ENCODE measurements at regions of chr3 and their contacts with region 1.

Region 1: DNA sequence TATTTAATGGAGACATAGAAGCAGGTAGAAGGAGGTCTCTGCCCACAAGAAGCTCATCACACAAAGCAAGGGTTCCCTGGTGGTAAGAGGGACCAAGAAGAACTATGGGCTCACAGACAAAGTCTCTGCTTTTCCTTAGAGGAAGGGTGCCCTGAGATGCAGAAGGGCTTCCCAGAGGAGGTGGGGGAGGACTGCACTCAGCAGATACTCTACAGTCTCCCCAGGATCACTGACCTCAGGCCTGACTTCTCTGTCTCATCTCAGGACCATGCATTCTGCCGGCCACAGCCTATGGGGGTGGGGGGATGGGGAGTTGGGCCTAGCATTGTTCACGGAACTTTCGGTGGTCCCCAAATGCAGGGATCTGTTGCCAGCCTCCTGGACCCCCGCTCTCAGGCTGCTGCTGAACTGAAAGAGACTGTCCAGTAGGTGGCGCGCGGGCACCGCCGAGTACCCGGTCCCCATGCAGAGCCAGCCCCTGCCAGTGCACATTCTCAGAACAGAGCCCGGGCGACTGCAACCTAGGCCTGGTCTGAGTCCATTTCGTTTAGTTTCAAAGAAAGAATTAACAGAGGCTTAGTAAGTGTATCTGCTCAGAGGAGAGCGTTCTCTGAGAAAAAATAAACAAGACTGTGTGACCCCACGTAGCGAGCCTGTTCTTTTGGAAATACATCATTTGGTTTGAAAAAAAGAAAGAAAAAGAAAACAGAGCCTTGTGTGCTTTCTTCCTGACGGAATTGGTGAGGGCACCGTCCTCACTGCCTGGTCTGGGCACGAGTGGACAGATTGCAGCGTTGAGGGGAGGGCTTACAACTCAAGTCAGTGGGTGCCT is 74.1 kb downstream of the LRTM1 start:
- DNase-seq: no peak
- ATAC-seq: peak; percentile 98
- H3K4me3 ChIP-seq: no peak overlapping the region
- H3K27ac ChIP-seq: no peak overlapping the region
- H3K4me1 ChIP-seq: no peaks in the 10 kb centered on the region
- H3K27me3 ChIP-seq: no peaks in the 10 kb centered on the region
- CTCF ChIP-seq: peak; percentile 76 to 90 (median 81)
- EP300 ChIP-seq: no peak
- POLR2A ChIP-seq: no peak
- RAD21 ChIP-seq: peak; percentile 77

Region 2: GRCh38 chr3:54427941-54428871 is 425.6 kb before region 1 on chr3:
- CTCF ChIA-PET with region 1: interaction called, 4 read pairs
- POLR2A ChIA-PET with region 1: no interaction called
- RAD21 ChIA-PET with region 1: no interaction called
- SMC1A ChIA-PET with region 1: no interaction called
- in situ Hi-C with region 1: no loop called
- intact Hi-C with region 1: loop called (anchors 5 kb)
- DNase-seq: peak; percentile 7
- ATAC-seq: peak; percentile 71
- H3K4me3 ChIP-seq: no peak overlapping the region
- H3K27ac ChIP-seq: no peak overlapping the region
- H3K4me1 ChIP-seq: no peaks in the 10 kb centered on the region
- H3K27me3 ChIP-seq: no peaks in the 10 kb centered on the region; a peak in 1 of 4 replicates
- CTCF ChIP-seq: peak; percentile 76 to 86 (median 82)
- EP300 ChIP-seq: no peak
- POLR2A ChIP-seq: no peak
- RAD21 ChIP-seq: peak; percentile 79

Region 3: GRCh38 chr3:54870423-54870822 is 16.6 kb after region 1 on chr3:
- CTCF ChIA-PET with region 1: no interaction called
- POLR2A ChIA-PET with region 1: no interaction called
- RAD21 ChIA-PET with region 1: no interaction called
- SMC1A ChIA-PET with region 1: no interaction called
- in situ Hi-C with region 1: no loop called
- intact Hi-C with region 1: no loop called
- DNase-seq: no peak
- ATAC-seq: no peak
- H3K4me3 ChIP-seq: no peak overlapping the region
- H3K27ac ChIP-seq: no peak overlapping the region
- H3K4me1 ChIP-seq: no peaks in the 10 kb centered on the region
- H3K27me3 ChIP-seq: 0 out of 4 replicates have a peak, but pooled peaks cover 0 to 4% of the 10 kb centered on the region in 2 experiments
- CTCF ChIP-seq: peak in 1 of 3 experiments; percentile 42; a peak in 2 of 6 replicates
- EP300 ChIP-seq: no peak
- POLR2A ChIP-seq: no peak
- RAD21 ChIP-seq: no peak

Region 4: GRCh38 chr3:55169608-55170010 is 315.8 kb after region 1 on chr3:
- CTCF ChIA-PET with region 1: no interaction called
- POLR2A ChIA-PET with region 1: no interaction called
- RAD21 ChIA-PET with region 1: no interaction called
- SMC1A ChIA-PET with region 1: no interaction called
- in situ Hi-C with region 1: loop called (anchors 10 kb)
- intact Hi-C with region 1: no loop called
- DNase-seq: no peak
- ATAC-seq: no peak
- H3K4me3 ChIP-seq: no peak overlapping the region
- H3K27ac ChIP-seq: no peak overlapping the region
- H3K4me1 ChIP-seq: no peaks in the 10 kb centered on the region
- H3K27me3 ChIP-seq: no peaks in the 10 kb centered on the region
- CTCF ChIP-seq: no peak
- EP300 ChIP-seq: no peak
- POLR2A ChIP-seq: no peak
- RAD21 ChIP-seq: no peak

Region 5: GRCh38 chr3:55180936-55181535 is 327.2 kb after region 1 on chr3:
- CTCF ChIA-PET with region 1: interaction called, 10 read pairs
- POLR2A ChIA-PET with region 1: no interaction called
- RAD21 ChIA-PET with region 1: interaction called, 6 read pairs
- SMC1A ChIA-PET with region 1: no interaction called
- in situ Hi-C with region 1: loop called (anchors 10 kb)
- intact Hi-C with region 1: loop called (anchors 1 kb)
- DNase-seq: no peak
- ATAC-seq: 0 out of 3 replicates have a peak, but pooled peaks have one; percentile 22
- H3K4me3 ChIP-seq: no peak overlapping the region
- H3K27ac ChIP-seq: no peak overlapping the region
- H3K4me1 ChIP-seq: no peaks in the 10 kb centered on the region
- H3K27me3 ChIP-seq: no peaks in the 10 kb centered on the region
- CTCF ChIP-seq: peak; percentile 54 to 70 (median 59); a peak in 5 of 6 replicates
- EP300 ChIP-seq: no peak
- POLR2A ChIP-seq: no peak
- RAD21 ChIP-seq: peak; percentile 45

Region 6: DNA sequence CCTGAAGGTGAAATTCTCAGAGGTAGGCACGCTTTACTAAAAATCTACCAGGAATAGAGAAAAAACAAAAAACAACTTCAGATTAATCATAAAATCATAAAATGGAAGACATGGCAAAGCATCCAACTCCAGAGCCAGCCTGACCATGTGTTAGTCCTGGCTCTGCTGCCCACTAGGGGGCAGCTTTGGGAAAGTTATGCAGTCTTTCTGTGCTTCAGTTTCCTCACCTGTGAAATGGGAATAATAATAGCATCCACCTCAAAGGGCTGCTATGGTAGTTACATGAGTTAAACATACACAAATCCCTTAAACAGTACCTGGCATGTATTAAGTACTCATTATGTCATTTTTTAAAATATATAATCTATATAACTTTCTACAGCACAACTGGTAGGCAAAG is 581.0 kb after region 1 on chr3:
- CTCF ChIA-PET with region 1: no interaction called
- POLR2A ChIA-PET with region 1: no interaction called
- RAD21 ChIA-PET with region 1: no interaction called
- SMC1A ChIA-PET with region 1: no interaction called
- in situ Hi-C with region 1: no loop called
- intact Hi-C with region 1: loop called (anchors 10 kb)
- DNase-seq: no peak
- ATAC-seq: peak; percentile 89
- H3K4me3 ChIP-seq: no peak overlapping the region
- H3K27ac ChIP-seq: no peak overlapping the region
- H3K4me1 ChIP-seq: no peaks in the 10 kb centered on the region
- H3K27me3 ChIP-seq: no peaks in the 10 kb centered on the region; a peak in 2 of 4 replicates
- CTCF ChIP-seq: peak; percentile 73 to 79 (median 74)
- EP300 ChIP-seq: no peak
- POLR2A ChIP-seq: no peak
- RAD21 ChIP-seq: peak; percentile 63

Region 7: DNA sequence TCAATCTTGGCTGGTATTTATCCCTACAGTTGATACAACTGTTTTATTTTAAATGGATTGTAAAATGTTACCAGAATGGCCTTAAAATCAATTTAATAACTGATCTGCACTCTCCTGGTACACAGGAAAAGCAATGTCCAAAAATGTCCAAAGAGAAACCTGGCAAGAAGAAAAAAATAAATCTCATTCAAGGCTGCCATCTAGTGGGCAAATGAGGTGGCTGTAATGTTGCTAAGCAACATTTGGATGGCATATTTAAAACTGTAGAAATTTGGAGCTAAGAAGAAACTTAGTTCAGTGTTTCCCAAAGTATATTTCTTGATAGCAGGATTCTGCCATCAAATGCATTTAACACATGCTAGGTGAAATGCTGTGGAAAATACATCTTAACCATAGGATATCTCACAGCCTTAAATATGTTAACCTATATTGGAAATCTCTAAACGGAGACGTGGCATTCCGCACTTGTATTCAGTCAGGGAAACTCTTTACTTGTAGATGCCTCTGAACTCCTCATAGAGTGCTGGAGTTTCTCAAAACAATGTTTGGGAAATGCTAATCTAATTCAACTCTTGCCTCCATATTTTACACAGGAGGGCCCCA is 1397.7 kb after region 1 on chr3:
- CTCF ChIA-PET with region 1: interaction called, 6 read pairs
- POLR2A ChIA-PET with region 1: no interaction called
- RAD21 ChIA-PET with region 1: no interaction called
- SMC1A ChIA-PET with region 1: interaction called, 3 read pairs
- in situ Hi-C with region 1: loop called (anchors 10 kb)
- intact Hi-C with region 1: loop called (anchors 2 kb)
- DNase-seq: peak; percentile 8
- ATAC-seq: peak; percentile 57; the same call in 2 of the 3 replicates
- H3K4me3 ChIP-seq: no peak overlapping the region
- H3K27ac ChIP-seq: no peak overlapping the region
- H3K4me1 ChIP-seq: no peaks in the 10 kb centered on the region
- H3K27me3 ChIP-seq: no peaks in the 10 kb centered on the region; a peak in 1 of 4 replicates
- CTCF ChIP-seq: peak; percentile 63 to 81 (median 75)
- EP300 ChIP-seq: no peak
- POLR2A ChIP-seq: no peak
- RAD21 ChIP-seq: peak; percentile 77

Measured in GM12878 (cell line).